ENCODE measurements at regions of chr15 and their contacts with region 1.

Region 1: DNA sequence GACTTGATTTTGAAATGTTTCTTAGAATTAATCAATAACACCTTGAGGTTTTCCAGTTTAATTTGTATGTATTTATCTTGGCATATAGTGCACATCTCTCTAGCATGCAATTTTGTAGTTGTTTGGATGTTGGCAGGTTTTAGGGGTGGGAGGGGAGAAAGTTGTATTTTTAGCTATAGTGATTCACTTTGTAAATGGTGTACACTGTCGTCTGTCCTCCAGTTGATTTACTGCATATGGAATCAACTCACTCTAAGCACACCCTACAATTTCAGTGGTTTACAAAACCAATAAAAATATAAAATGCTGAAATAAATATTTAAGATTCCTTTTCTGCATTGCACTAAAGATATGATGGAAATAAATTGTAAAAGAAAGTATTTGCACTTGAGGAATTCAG is 199.1 kb downstream of the CDIN1 start:
- DNase-seq: no peak
- CTCF ChIP-seq: no peak

Region 2: GRCh38 chr15:36791844-36792571 is 13.5 kb after region 1 on chr15:
- CTCF ChIA-PET with region 1: interaction called, 14 read pairs
- POLR2A ChIA-PET with region 1: no interaction called
- DNase-seq: no peak
- CTCF ChIP-seq: no peak